Naive thymus-derived CD4-positive, alpha-beta T cell (primary cell): ENCODE measurements at regions of chr13 and their contacts with region 1.

Region 1: DNA sequence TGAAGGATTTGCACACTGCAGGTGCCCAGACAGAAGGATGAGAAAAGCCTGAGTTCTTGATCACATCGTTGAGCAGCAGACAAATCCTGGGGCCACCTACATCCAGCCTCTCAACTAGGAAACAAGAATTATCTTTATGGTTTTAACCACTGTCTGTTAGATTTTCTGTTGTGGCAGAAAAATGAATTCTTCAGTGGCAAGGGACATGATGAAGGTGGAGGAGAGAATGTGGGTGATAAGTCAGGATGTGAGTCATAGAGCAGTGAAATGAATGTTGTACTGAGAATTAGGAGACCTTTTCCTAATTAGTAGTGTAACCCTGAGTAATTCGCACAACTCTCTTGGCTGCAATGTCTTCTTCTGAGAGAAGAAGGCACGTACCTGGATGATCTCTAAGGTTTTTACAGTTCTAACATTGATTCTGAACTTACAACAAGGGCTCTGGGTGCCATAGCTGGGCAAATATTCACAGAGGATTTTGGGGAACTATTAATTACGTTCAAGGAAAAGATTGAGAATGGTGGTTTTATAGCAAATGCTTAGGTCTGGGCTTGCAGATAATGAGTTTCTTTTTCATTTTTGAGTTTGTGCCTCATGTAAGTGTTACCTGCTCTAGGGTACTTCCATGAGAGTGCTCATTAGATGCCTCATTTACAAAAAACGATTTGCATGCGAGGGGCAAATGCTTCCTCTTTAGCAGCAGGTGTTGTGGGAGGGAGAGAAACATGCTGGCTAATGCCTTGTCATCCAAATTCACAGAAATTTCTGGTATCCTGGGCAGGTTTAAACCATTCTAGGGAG is 111.0 kb upstream of the KL start:
- DNase-seq: peak in 1 of 9 donors; percentile 32
- ATAC-seq: no peak
- H3K4me3 ChIP-seq: no peak overlapping the region
- H3K4me3 Mint-ChIP-seq: peak overlapping the region in 1 of 10 donors; percentile 79
- H3K27ac ChIP-seq: no peak overlapping the region
- H3K27ac Mint-ChIP-seq: peak overlapping the region in 2 of 9 donors; percentile 6 to 89
- H3K4me1 ChIP-seq: no peaks in the 10 kb centered on the region
- H3K4me1 Mint-ChIP-seq: peaks cover 0 to 53% (median 14%) of the 10 kb centered on the region in 7 donors
- H3K27me3 ChIP-seq: no peaks in the 10 kb centered on the region
- H3K27me3 Mint-ChIP-seq: peaks cover 0 to 4% (median 0%) of the 10 kb centered on the region in 5 donors

Region 2: GRCh38 chr13:31807090-31807541 is 1098.1 kb before region 1 on chr13:
- CTCF ChIA-PET with region 1: no interaction called
- POLR2A ChIA-PET with region 1: no interaction called
- intact Hi-C with region 1: no loop called
- DNase-seq: no peak
- ATAC-seq: peak; percentile 86
- H3K4me3 ChIP-seq: no peak overlapping the region
- H3K4me3 Mint-ChIP-seq: peak overlapping the region in 1 of 10 donors; percentile 34
- H3K27ac ChIP-seq: no peak overlapping the region
- H3K27ac Mint-ChIP-seq: peak overlapping the region in 1 of 9 donors; percentile 84
- H3K4me1 ChIP-seq: peaks cover 0 to 9% of the 10 kb centered on the region in 2 donors
- H3K4me1 Mint-ChIP-seq: peaks cover 0 to 15% (median 0%) of the 10 kb centered on the region in 7 donors
- H3K27me3 ChIP-seq: no peaks in the 10 kb centered on the region
- H3K27me3 Mint-ChIP-seq: peaks cover 0 to 13% (median 0%) of the 10 kb centered on the region in 5 donors

Region 3: DNA sequence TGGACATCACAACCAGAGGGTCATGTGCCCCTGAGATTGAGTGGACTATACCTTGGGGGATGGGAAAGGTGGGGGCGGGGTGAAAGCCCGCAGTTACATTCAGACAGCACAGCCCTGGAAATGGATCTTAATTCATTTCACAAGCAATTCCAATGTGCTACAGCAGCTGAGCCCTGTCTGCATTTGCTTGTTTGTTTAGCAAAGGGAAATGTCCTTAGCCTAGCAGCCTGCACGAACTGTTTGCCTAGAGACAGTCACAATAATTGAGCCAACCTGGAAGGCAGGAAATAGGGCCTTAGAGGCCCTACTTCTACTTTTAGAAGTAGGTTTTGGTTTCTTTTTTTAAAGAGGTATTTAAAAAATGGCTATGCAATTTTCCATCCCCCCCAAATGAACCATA is 66.3 kb before region 1 on chr13:
- CTCF ChIA-PET with region 1: no interaction called
- POLR2A ChIA-PET with region 1: no interaction called
- intact Hi-C with region 1: loop called in 1 of 2 experiments (anchors 1 kb)
- DNase-seq: peak in 4 of 9 donors; percentile 8 to 20 (median 16)
- ATAC-seq: no peak
- H3K4me3 ChIP-seq: no peak overlapping the region
- H3K4me3 Mint-ChIP-seq: peak overlapping the region in 5 of 10 donors; percentile 20 to 63 (median 25)
- H3K27ac ChIP-seq: no peak overlapping the region
- H3K27ac Mint-ChIP-seq: peak overlapping the region in 5 of 9 donors; percentile 26 to 91 (median 63)
- H3K4me1 ChIP-seq: peaks cover 0 to 12% of the 10 kb centered on the region in 2 donors
- H3K4me1 Mint-ChIP-seq: peaks cover 4 to 28% (median 16%) of the 10 kb centered on the region in 7 donors
- H3K27me3 ChIP-seq: no peaks in the 10 kb centered on the region
- H3K27me3 Mint-ChIP-seq: peaks cover 0 to under 1% (median 0%) of the 10 kb centered on the region in 5 donors

Region 4: DNA sequence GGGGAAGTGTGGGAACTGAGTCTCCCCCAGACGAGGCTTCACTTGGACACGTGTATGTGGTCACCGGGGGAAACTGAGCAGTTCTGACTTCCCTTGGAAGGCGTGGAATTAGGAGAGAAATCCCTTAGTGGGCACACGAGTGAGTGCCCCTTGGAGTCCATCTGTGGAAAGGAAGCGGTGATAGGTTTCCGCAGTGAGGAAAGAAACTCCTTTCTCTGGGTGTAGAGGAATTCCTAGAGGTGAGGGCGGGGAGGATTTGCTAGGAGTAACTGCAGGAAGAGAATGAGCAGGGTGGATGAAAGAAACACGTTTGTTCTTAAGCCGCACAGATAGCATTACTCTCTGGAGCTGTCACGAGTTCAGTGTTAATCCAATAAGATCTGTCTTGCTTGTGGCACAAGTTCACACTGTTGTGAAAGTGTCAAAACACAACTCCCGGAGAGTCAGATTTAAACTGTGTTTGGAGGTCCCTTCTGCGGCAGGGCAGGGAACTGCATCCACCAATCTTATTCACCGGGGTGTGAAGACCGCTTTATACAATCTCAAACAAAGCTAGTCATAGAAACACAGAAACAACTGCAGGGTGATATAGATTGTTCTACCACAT is 112.2 kb after region 1 on chr13:
- CTCF ChIA-PET with region 1: no interaction called
- POLR2A ChIA-PET with region 1: no interaction called
- intact Hi-C with region 1: loop called in 1 of 2 experiments (anchors 1 kb)
- DNase-seq: peak in 6 of 9 donors; percentile 6 to 47 (median 18)
- ATAC-seq: peak; percentile 80
- H3K4me3 ChIP-seq: peak overlapping the region; percentile 30
- H3K4me3 Mint-ChIP-seq: peak overlapping the region; percentile 37 to 81 (median 73)
- H3K27ac ChIP-seq: no peak overlapping the region
- H3K27ac Mint-ChIP-seq: peak overlapping the region in 2 of 9 donors; percentile 49 to 66
- H3K4me1 ChIP-seq: peaks cover 3 to 7% of the 10 kb centered on the region in 2 donors
- H3K4me1 Mint-ChIP-seq: peaks cover 10 to 21% (median 15%) of the 10 kb centered on the region in 7 donors
- H3K27me3 ChIP-seq: peaks cover 4 to 7% of the 10 kb centered on the region in 2 donors
- H3K27me3 Mint-ChIP-seq: peaks cover 65 to 83% (median 71%) of the 10 kb centered on the region in 5 donors